ENCODE measurements at regions of chr10 and their contacts with region 1.

Region 1: GRCh38 chr10:115118346-115118745 is 25.2 kb downstream of the ATRNL1 start:
- DNase-seq: no peak
- H3K4me3 ChIP-seq: no peak overlapping the region
- H3K27ac ChIP-seq: no peak overlapping the region
- H3K4me1 ChIP-seq: no peaks in the 10 kb centered on the region
- H3K27me3 ChIP-seq: no peaks in the 10 kb centered on the region
- CTCF ChIP-seq: no peak
- POLR2A ChIP-seq: no peak

Region 2: GRCh38 chr10:114876602-114877300 is 241.6 kb before region 1 on chr10:
- intact Hi-C with region 1: loop called (anchors 10 kb)
- DNase-seq: peak; percentile 51 to 67
- H3K4me3 ChIP-seq: no peak overlapping the region
- H3K27ac ChIP-seq: no peak overlapping the region
- H3K4me1 ChIP-seq: no peaks in the 10 kb centered on the region
- H3K27me3 ChIP-seq: no peaks in the 10 kb centered on the region
- CTCF ChIP-seq: peak in 4 of 6 experiments; percentile 46 to 77 (median 53)
- POLR2A ChIP-seq: no peak

Region 3: GRCh38 chr10:114937962-114938855 is 180.1 kb before region 1 on chr10 and contains the start of gene TRUB1:
- intact Hi-C with region 1: no loop called
- DNase-seq: peak; percentile 95 to 96
- H3K4me3 ChIP-seq: peak within 1 kb of the TSS; percentile 62 to 94 (median 69)
- H3K27ac ChIP-seq: peak within 1 kb of the TSS; percentile 28 to 88 (median 74)
- H3K4me1 ChIP-seq: peaks cover 12 to 15% of the 10 kb centered on the region in 2 donors
- H3K27me3 ChIP-seq: no peaks in the 10 kb centered on the region
- CTCF ChIP-seq: no peak
- POLR2A ChIP-seq: peak in 1 of 2 donors; percentile 75
- total RNA-seq, gene TRUB1: 16.1 to 26.5 (median 22.8) TPM

Region 4: DNA sequence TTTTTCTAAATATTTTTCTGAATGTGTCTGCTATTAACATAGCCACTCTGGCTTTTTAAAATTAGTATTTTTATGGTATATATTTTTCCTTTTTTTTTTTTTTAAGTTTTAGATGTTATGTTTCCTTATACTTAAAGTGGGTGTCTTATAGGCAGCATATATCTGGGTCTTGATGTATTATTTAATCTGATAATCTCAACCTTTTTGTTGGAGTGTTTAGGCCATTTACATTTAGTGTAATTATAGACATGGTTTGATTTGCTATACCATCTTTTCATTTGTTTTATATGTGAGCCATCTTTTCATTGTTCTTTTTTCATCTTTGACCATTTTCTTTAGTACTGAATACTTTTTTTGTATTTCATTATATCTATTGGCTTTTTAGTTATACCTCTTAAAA is 135.4 kb before region 1 on chr10:
- intact Hi-C with region 1: no loop called
- DNase-seq: no peak
- H3K4me3 ChIP-seq: no peak overlapping the region
- H3K27ac ChIP-seq: no peak overlapping the region
- H3K4me1 ChIP-seq: no peaks in the 10 kb centered on the region
- H3K27me3 ChIP-seq: no peaks in the 10 kb centered on the region
- CTCF ChIP-seq: no peak
- POLR2A ChIP-seq: no peak

Measured in thyroid gland (tissue), 4 donors.